ENCODE measurements at regions of chr3 and their contacts with region 1.

Region 1: GRCh38 chr3:42190701-42191462 is 75.1 kb downstream of the CCK start:
- DNase-seq: peak; percentile 90
- ATAC-seq: peak; percentile 94
- H3K4me3 ChIP-seq: no peak overlapping the region
- H3K27ac ChIP-seq: no peak overlapping the region
- H3K4me1 ChIP-seq: no peaks in the 10 kb centered on the region
- H3K27me3 ChIP-seq: no peaks in the 10 kb centered on the region
- CTCF ChIP-seq: peak; percentile 97

Region 2: GRCh38 chr3:41893977-41894376 is 296.9 kb before region 1 on chr3:
- CTCF ChIA-PET with region 1: no interaction called
- POLR2A ChIA-PET with region 1: no interaction called
- intact Hi-C with region 1: loop called (anchors 1 kb)
- DNase-seq: peak; percentile 71
- ATAC-seq: peak; percentile 69
- H3K4me3 ChIP-seq: no peak overlapping the region
- H3K27ac ChIP-seq: no peak overlapping the region
- H3K4me1 ChIP-seq: no peaks in the 10 kb centered on the region
- H3K27me3 ChIP-seq: no peaks in the 10 kb centered on the region
- CTCF ChIP-seq: peak; percentile 77

Region 3: DNA sequence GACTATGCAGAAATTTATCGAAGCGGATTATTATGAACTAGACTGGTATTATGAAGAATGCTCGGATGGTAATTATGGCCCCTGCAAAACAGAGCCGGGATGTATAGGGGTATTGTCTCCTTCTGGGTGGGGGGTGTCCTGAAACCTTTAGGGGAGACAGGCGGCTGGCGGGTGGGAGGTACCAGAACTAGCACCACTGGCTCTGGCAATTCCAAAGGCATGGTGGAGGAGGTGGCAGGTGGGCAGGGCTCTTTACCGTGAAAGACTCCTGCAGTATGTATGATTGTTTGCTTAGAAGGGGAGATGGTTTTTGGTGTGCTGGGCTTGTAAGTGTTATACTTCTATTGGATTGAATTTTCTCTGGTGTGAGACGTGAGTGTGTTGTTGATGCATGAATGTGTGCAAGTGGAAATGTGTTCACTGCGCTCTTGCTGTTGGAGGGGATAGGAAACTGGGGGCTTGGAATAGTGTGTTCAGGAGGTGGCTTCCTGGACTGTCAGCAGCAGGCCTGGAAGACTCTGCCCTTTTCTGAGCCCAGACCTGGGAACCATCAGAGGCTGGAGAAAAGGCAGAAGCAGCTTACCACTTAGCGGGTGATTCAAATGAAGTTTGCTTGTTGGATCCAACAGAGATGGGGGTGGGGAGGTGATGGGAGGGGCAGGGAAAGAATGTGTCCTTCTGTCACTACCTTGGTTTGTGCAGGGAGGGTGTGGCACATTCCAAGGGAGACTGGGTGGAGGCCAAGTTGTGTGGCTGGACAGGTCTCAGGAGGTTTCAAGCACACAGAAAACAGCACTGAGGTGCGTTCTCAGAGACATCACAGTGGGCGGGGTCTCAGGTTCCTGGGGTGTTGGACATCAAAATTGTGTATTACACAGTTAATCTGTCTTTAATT is 41.1 kb before region 1 on chr3:
- CTCF ChIA-PET with region 1: interaction called, 5 read pairs
- POLR2A ChIA-PET with region 1: no interaction called
- intact Hi-C with region 1: loop called (anchors 1 kb)
- DNase-seq: peak; percentile 96
- ATAC-seq: peak; percentile 77
- H3K4me3 ChIP-seq: peak overlapping the region; percentile 27; the same call in 1 of the 2 replicates
- H3K27ac ChIP-seq: peak overlapping the region; percentile 85
- H3K4me1 ChIP-seq: peaks cover 41% of the 10 kb centered on the region
- H3K27me3 ChIP-seq: no peaks in the 10 kb centered on the region
- CTCF ChIP-seq: no peak